ENCODE measurements at regions of chr1 and their contacts with region 1.

Region 1: DNA sequence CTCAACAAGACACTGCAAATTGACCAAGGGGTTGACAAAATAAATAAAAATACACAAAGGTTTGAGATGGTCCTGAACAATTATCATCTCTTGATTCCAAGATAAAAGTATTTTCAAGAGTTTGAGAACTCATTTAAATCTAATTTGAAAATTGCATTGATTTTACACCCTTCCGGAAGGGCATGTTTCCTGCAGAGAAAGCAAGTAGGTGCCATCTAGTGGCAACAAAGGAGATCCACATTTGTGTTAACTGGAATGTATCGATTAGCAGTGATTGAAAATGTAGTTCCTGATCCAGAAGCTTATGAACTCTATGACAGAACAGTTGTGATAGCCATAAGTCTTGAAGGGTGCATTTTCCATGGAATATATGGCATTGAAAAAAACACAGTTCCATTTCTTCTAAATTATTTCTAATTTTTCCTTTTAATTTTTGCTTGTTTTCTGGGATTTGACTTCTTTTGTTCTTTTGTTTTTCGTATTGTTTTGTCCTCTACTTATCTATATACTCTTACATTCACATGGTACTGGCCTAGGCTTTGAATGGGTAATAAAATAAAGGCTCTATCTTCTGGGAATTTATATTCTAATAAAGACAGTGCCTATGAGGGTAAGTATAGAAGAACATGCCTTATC is 143.7 kb downstream of the DNM3 start:
- DNase-seq: no peak
- H3K4me3 Mint-ChIP-seq: no peak overlapping the region
- H3K27ac Mint-ChIP-seq: no peak overlapping the region
- H3K4me1 Mint-ChIP-seq: no peaks in the 10 kb centered on the region
- H3K27me3 Mint-ChIP-seq: peaks cover 16% of the 10 kb centered on the region

Region 2: GRCh38 chr1:171644805-171645483 is 340.0 kb before region 1 on chr1:
- intact Hi-C with region 1: loop called (anchors 1 kb)
- DNase-seq: peak; percentile 67
- H3K4me3 Mint-ChIP-seq: no peak overlapping the region
- H3K27ac Mint-ChIP-seq: no peak overlapping the region
- H3K4me1 Mint-ChIP-seq: peaks cover 8% of the 10 kb centered on the region
- H3K27me3 Mint-ChIP-seq: peaks cover 4% of the 10 kb centered on the region

Region 3: GRCh38 chr1:171654942-171655745 is 329.8 kb before region 1 on chr1:
- intact Hi-C with region 1: loop called (anchors 2 kb)
- DNase-seq: peak; percentile 60
- H3K4me3 Mint-ChIP-seq: no peak overlapping the region
- H3K27ac Mint-ChIP-seq: no peak overlapping the region
- H3K4me1 Mint-ChIP-seq: peaks cover 10% of the 10 kb centered on the region
- H3K27me3 Mint-ChIP-seq: peaks cover 21% of the 10 kb centered on the region

Region 4: DNA sequence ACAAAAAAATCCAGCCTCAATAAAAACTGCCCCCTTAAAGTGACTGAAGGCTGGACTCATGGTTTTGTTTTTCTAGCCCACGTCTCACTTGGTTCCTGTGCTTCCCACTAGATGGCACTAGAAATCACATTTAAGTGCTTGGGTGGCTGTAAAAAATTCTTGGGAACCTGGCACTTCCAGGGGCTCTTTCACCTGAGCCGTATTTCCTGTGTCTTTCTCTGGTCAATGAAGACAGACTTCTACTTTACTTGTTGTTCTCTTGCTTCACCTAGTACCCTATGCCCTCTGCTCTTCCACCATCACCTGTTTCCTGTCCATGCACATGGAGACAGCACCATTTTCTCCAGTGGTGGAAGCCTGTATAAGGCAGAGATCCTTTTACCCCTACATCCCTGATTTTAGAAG is 183.5 kb before region 1 on chr1:
- intact Hi-C with region 1: loop called (anchors 1 kb)
- DNase-seq: no peak
- H3K4me3 Mint-ChIP-seq: no peak overlapping the region
- H3K27ac Mint-ChIP-seq: no peak overlapping the region
- H3K4me1 Mint-ChIP-seq: peaks cover 10% of the 10 kb centered on the region
- H3K27me3 Mint-ChIP-seq: no peaks in the 10 kb centered on the region

Region 5: DNA sequence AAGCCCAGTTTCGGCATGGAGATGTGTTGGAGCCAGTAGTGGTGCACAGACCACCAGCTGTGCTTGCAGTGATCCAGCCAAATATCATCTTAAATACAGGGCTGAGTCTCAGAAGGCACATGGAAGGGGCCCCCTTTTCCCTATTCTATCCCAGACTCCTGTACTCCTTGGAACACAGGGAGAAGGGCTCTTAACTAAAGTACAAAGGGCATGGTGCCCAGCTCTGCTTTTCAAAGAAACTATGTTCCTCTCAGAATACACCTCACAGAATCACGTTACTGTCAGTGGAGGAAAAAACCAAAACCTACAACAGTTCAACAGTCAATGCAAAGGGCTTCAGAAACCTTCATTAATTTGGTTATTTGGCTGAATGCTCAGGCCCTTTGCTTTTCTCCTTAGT is 254.9 kb after region 1 on chr1:
- intact Hi-C with region 1: no loop called
- DNase-seq: no peak
- H3K4me3 Mint-ChIP-seq: no peak overlapping the region
- H3K27ac Mint-ChIP-seq: no peak overlapping the region
- H3K4me1 Mint-ChIP-seq: no peaks in the 10 kb centered on the region
- H3K27me3 Mint-ChIP-seq: peaks cover 3% of the 10 kb centered on the region